ENCODE measurements at regions of chr18 and their contacts with region 1.

Region 1: GRCh38 chr18:48868468-48869466 is 82.0 kb downstream of the SMAD7 start:
- DNase-seq: peak in 4 of 5 donors; percentile 9 to 24 (median 16)
- H3K4me3 ChIP-seq: no peak overlapping the region
- H3K4me3 Mint-ChIP-seq: peak overlapping the region in 6 of 8 donors; percentile 6 to 49 (median 32)
- H3K27ac ChIP-seq: no peak overlapping the region
- H3K27ac Mint-ChIP-seq: peak overlapping the region; percentile 54 to 89 (median 78)
- H3K4me1 ChIP-seq: peaks cover 26% of the 10 kb centered on the region
- H3K4me1 Mint-ChIP-seq: peaks cover 17 to 34% (median 19%) of the 10 kb centered on the region in 4 donors
- H3K27me3 ChIP-seq: no peaks in the 10 kb centered on the region
- H3K27me3 Mint-ChIP-seq: no peaks in the 10 kb centered on the region

Region 2: GRCh38 chr18:48428475-48429177 is 440.1 kb before region 1 on chr18:
- CTCF ChIA-PET with region 1: no interaction called
- POLR2A ChIA-PET with region 1: no interaction called
- intact Hi-C with region 1: no loop called
- DNase-seq: no peak
- H3K4me3 ChIP-seq: no peak overlapping the region
- H3K4me3 Mint-ChIP-seq: no peak overlapping the region
- H3K27ac ChIP-seq: no peak overlapping the region
- H3K27ac Mint-ChIP-seq: no peak overlapping the region
- H3K4me1 ChIP-seq: no peaks in the 10 kb centered on the region
- H3K4me1 Mint-ChIP-seq: no peaks in the 10 kb centered on the region
- H3K27me3 ChIP-seq: no peaks in the 10 kb centered on the region
- H3K27me3 Mint-ChIP-seq: peaks cover 23 to 46% of the 10 kb centered on the region in 2 donors

Region 3: GRCh38 chr18:48834413-48835031 is 34.2 kb before region 1 on chr18:
- CTCF ChIA-PET with region 1: interaction called, 3 read pairs
- POLR2A ChIA-PET with region 1: interaction called, 8 read pairs
- intact Hi-C with region 1: loop called (anchors 5 kb)
- DNase-seq: peak; percentile 58 to 90 (median 62)
- H3K4me3 ChIP-seq: peak overlapping the region; percentile 42 to 54
- H3K4me3 Mint-ChIP-seq: peak overlapping the region; percentile 81 to 98 (median 90)
- H3K27ac ChIP-seq: peak overlapping the region; percentile 74
- H3K27ac Mint-ChIP-seq: peak overlapping the region; percentile 90 to 97 (median 96)
- H3K4me1 ChIP-seq: peaks cover 100% of the 10 kb centered on the region
- H3K4me1 Mint-ChIP-seq: peaks cover 59 to 100% (median 79%) of the 10 kb centered on the region in 4 donors
- H3K27me3 ChIP-seq: no peaks in the 10 kb centered on the region
- H3K27me3 Mint-ChIP-seq: no peaks in the 10 kb centered on the region

Region 4: DNA sequence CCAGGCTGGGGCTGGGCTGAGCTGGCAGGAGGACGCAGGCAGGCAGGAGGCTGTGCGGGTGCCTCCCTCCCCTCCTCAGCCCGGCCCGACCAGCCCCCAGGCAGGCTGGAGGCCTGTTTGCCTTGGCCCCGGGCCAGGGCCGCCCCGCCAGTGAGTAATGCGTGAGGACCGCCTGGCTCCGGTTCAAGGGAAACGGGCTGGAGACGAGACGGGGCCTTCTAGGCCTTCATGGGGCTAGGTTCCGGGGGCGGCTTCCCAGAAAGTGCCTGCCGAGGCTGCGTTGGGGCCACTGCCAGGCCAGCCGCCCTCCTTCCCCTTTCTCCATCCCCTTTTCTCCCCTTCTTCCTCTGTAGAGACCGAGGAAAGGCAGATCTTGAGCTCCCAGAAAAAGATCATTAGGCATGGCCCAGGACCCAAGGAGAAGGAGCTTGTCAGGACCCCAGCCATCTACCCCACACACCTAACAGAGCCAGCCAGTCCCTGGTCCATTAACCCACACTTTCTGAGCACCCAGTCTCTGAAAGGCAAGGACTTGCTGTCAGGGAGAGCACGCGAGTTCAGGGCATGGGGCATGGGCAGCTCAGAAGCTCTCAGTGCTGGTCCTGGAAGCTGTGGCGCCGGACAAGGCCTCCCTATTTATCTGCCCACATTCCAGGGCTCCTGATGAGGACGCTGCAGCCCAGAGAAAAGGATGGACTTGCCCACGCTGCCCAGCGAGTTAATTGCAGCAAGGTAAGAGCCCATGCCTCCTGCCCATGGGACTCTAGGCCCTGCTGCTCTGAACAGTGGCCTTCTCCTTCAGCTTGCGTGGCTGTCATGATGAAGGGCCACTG is 33.5 kb after region 1 on chr18:
- CTCF ChIA-PET with region 1: no interaction called
- POLR2A ChIA-PET with region 1: no interaction called
- intact Hi-C with region 1: loop called (anchors 5 kb)
- DNase-seq: no peak
- H3K4me3 ChIP-seq: no peak overlapping the region
- H3K4me3 Mint-ChIP-seq: no peak overlapping the region
- H3K27ac ChIP-seq: no peak overlapping the region
- H3K27ac Mint-ChIP-seq: no peak overlapping the region
- H3K4me1 ChIP-seq: no peaks in the 10 kb centered on the region
- H3K4me1 Mint-ChIP-seq: peaks cover 0 to 15% (median 3%) of the 10 kb centered on the region in 4 donors
- H3K27me3 ChIP-seq: no peaks in the 10 kb centered on the region
- H3K27me3 Mint-ChIP-seq: peaks cover 0 to 2% of the 10 kb centered on the region in 2 donors

Measured in CD4-positive, alpha-beta memory T cell (primary cell).